ENCODE measurements at regions of chr9 and their contacts with region 1.

Region 1: GRCh38 chr9:33404788-33405362 is 2.5 kb upstream of the AQP7 start:
- DNase-seq: peak; percentile 13
- H3K4me3 ChIP-seq: no peak overlapping the region
- H3K27ac ChIP-seq: no peak overlapping the region
- H3K4me1 ChIP-seq: no peaks in the 10 kb centered on the region
- CTCF ChIP-seq: no peak

Region 2: DNA sequence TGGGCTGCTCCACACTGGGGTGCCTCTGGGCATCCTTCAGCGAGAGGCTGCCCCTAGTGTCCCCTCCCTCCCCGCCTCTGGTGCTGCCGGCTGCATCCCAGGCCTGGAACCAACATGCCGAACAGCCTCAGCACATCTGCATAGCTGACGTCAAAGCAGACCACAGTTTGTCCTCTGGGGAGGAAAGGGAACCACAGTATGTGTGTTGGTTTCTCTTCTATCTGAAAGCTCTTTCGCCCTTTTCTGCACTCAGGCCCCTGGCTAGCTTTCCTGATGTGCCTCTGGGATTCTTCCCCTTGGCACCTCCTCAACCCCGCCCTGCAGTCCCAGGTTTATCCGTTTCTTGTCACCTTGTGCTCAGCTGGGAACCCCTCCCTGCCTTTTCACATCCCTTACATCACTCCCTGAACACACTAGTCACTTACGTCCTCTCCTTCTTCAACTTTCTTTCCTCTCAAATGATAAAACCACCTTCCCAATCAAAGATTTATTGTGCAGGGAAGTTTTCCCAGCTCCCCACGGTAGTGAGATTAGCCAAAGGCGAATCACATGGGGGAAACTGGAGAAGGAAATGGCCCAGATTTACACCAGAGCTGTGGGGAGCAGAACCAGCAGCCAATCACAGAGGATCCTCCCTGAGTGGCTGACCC is 202.2 kb before region 1 on chr9:
- CTCF ChIA-PET with region 1: no interaction called
- POLR2A ChIA-PET with region 1: no interaction called
- intact Hi-C with region 1: no loop called
- DNase-seq: peak; percentile 73
- H3K4me3 ChIP-seq: peak overlapping the region; percentile 9
- H3K27ac ChIP-seq: no peak overlapping the region
- H3K4me1 ChIP-seq: peaks cover 15% of the 10 kb centered on the region
- CTCF ChIP-seq: no peak

Region 3: DNA sequence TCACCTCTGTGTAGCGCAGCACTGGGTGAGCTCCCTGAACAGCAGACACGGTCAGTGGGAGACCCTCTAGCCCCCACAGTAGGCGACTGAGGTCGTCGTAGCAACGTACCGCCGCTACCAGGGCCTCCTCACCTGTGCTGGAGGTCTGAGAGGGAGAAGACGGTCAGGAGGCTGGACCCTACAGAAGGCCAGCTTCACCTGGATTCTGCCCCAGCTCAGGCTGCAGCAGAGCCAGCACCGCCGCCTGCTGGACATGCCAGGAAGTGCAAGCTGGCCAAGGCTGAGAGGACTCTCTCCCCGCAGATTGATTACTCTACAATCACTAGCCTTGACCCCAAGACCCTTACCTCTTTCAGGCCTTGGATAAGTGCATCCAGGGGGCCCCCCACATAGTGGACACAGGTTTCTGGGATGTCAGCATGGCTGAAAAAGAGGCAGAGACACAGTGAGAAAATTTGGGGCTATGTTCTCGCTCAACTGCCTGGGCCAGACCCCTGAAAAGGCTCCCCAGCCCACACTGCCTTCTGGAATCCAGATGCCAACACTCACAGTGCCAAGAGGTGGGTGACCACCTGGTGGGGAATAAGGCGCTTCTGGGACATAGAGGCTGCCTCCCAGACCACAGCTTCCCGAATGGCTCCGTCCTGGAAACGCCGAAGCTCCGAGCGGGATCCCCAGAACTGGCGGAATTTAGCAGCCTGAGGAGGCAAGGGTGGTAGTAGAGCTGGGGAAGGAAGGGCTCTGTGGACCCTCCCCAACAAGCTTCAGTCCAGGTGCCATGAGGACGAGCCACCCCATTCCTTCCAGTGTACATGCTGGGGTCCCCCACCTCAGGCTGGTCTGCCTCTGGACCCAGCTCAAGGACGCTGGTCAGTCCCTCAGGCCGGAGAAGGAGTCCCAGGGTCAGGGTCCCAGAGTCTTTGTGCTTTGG is 62.0 kb after region 1 on chr9:
- CTCF ChIA-PET with region 1: interaction called, 9 read pairs
- POLR2A ChIA-PET with region 1: no interaction called
- intact Hi-C with region 1: loop called (anchors 1 kb)
- DNase-seq: peak; percentile 60
- H3K4me3 ChIP-seq: no peak overlapping the region
- H3K27ac ChIP-seq: no peak overlapping the region
- H3K4me1 ChIP-seq: peaks cover 1% of the 10 kb centered on the region
- CTCF ChIP-seq: peak; percentile 83

Region 4: GRCh38 chr9:33517373-33517772 is 112.5 kb after region 1 on chr9:
- CTCF ChIA-PET with region 1: no interaction called
- POLR2A ChIA-PET with region 1: no interaction called
- intact Hi-C with region 1: loop called (anchors 5 kb)
- DNase-seq: peak; percentile 33
- H3K4me3 ChIP-seq: no peak overlapping the region
- H3K27ac ChIP-seq: no peak overlapping the region
- H3K4me1 ChIP-seq: no peaks in the 10 kb centered on the region
- CTCF ChIP-seq: peak; percentile 82

Region 5: DNA sequence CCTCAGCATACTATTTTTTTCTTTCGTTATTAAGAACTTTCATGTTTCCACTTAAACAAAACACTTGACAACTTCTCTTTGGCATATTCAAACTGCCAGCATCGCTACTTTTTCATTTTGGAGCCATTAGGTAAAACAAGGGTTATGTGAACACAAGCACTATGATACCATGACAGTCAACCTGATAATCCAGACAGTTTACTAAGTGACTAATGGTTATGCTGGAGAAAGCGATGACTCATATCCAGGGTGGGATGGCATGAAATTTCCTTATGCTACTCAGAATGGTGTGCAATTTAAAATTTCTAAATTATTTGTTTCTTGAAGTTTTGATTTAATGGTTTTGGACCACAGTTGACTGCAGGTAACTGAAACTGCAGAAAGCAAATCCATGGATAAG is 360.5 kb after region 1 on chr9:
- CTCF ChIA-PET with region 1: no interaction called
- POLR2A ChIA-PET with region 1: no interaction called
- intact Hi-C with region 1: no loop called
- DNase-seq: no peak
- H3K4me3 ChIP-seq: no peak overlapping the region
- H3K27ac ChIP-seq: no peak overlapping the region
- H3K4me1 ChIP-seq: no peaks in the 10 kb centered on the region
- CTCF ChIP-seq: no peak